ENCODE measurements at regions of chr13 and their contacts with region 1.

Region 1: DNA sequence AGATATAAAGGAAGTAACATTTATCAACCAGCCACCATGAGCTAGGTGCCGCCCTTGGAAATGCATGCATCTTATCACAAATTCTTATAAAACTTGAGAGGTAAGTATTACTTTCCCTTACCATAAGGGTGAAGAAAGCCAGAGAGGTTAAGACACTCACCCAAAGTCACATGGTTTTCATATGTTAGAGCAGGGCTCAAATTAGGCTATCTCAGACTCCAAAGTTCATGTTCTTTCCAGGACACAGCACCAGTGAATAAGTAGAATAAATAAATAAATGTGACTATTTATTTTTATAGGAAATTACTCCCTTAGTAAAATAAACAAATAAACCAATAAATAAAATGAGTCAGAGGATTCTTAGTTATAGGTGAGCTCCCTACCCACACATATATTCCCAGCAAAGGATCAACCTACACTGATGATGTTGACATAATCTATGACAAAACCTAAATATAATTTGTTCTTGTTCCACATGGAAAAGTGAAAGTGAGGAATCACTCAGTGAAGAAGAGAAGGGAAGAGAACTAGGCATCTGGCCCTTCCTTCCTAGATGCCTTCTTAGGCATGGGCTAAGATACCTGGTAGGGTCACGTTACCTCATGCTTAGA is 27.2 kb downstream of the SPRY2 start:
- DNase-seq: peak; percentile 68
- ATAC-seq: peak; percentile 93
- H3K4me3 ChIP-seq: no peak overlapping the region
- H3K27ac ChIP-seq: peak overlapping the region; percentile 58
- H3K4me1 ChIP-seq: peaks cover 14% of the 10 kb centered on the region
- H3K27me3 ChIP-seq: no peaks in the 10 kb centered on the region
- CTCF ChIP-seq: no peak

Region 2: DNA sequence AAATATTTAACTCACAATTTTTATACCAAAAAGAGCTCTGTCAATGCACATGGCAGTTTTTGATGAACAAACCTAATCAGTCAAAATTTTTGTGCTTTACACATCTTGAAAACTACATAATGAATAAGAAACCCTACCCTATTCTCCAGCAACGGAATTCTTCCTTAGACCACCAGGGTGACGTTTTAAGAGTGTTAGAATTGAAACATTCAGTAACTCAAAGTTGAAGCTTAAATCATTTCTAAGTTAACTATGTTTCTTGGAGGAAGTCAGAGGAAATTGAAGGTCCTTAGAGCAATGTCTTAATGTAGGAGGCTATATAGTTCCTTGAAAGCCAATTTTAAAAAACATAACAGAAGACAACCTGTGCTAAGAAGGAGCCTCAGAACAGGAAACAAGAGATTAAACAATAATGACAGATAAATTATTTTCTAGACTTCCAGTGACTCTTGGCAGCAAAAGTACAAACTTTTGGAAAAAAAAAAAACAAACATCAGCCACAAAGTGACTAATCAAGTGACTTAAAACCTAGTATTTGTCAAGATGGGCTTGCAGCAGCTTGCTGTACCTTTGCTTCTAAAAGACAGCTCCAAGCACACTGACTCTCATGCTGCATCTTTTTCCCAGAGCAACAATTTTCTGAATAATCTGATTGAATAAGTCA is 21.0 kb after region 1 on chr13:
- CTCF ChIA-PET with region 1: no interaction called
- POLR2A ChIA-PET with region 1: interaction called, 14 read pairs
- intact Hi-C with region 1: no loop called
- DNase-seq: peak; percentile 39
- ATAC-seq: no peak
- H3K4me3 ChIP-seq: peak overlapping the region; percentile 42; the same call in 1 of the 2 replicates
- H3K27ac ChIP-seq: peak overlapping the region; percentile 35
- H3K4me1 ChIP-seq: peaks cover 28% of the 10 kb centered on the region
- H3K27me3 ChIP-seq: no peaks in the 10 kb centered on the region
- CTCF ChIP-seq: no peak

Region 3: GRCh38 chr13:80399340-80400163 is 85.8 kb after region 1 on chr13:
- CTCF ChIA-PET with region 1: no interaction called
- POLR2A ChIA-PET with region 1: no interaction called
- intact Hi-C with region 1: no loop called
- DNase-seq: peak; percentile 34
- ATAC-seq: no peak
- H3K4me3 ChIP-seq: no peak overlapping the region
- H3K27ac ChIP-seq: no peak overlapping the region
- H3K4me1 ChIP-seq: no peaks in the 10 kb centered on the region
- H3K27me3 ChIP-seq: no peaks in the 10 kb centered on the region
- CTCF ChIP-seq: no peak